ENCODE measurements at regions of chr1 and their contacts with region 1.

Region 1: DNA sequence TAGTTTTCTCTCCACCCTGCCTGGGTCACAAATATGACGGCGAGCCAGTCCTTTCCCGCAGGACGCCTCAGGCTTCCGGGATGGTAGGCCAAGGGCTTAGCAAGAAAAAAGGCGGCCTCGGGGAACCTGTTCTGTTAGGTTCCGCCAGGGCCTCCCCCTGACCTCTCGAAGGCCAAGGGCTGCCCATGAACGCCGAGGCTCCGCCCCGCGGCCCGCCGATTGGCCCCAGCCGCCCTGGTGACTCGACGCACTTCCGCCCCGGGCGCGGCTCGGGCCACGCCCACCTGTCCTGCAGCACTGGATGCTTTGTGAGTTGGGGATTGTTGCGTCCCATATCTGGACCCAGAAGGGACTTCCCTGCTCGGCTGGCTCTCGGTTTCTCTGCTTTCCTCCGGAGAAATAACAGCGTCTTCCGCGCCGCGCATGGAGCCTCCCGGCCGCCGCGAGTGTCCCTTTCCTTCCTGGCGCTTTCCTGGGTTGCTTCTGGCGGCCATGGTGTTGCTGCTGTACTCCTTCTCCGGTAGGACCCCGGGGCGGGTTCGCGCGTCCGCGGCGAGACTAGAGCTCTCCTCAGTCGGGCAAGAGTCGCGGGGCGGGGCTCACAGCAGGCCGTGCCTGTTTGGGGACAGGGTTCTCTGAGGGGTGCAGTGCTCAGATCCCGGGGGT is at the start of gene CD46:
- DNase-seq: peak; percentile 95 to 96
- ATAC-seq: peak; percentile 90 to 91
- H3K4me3 ChIP-seq: peak within 1 kb of the TSS; percentile 83 to 98 (median 91)
- H3K27ac ChIP-seq: peak within 1 kb of the TSS; percentile 90 to 97 (median 92)
- H3K4me1 ChIP-seq: peaks cover 47 to 48% of the 10 kb centered on the region in 2 donors
- H3K27me3 ChIP-seq: no peaks in the 10 kb centered on the region
- CTCF ChIP-seq: peak in 3 of 5 experiments; percentile 10 to 25 (median 13)
- POLR2A ChIP-seq: peak; percentile 80 to 91
- total RNA-seq, gene CD46: 42.1 to 101 (median 80.2) TPM

Region 2: DNA sequence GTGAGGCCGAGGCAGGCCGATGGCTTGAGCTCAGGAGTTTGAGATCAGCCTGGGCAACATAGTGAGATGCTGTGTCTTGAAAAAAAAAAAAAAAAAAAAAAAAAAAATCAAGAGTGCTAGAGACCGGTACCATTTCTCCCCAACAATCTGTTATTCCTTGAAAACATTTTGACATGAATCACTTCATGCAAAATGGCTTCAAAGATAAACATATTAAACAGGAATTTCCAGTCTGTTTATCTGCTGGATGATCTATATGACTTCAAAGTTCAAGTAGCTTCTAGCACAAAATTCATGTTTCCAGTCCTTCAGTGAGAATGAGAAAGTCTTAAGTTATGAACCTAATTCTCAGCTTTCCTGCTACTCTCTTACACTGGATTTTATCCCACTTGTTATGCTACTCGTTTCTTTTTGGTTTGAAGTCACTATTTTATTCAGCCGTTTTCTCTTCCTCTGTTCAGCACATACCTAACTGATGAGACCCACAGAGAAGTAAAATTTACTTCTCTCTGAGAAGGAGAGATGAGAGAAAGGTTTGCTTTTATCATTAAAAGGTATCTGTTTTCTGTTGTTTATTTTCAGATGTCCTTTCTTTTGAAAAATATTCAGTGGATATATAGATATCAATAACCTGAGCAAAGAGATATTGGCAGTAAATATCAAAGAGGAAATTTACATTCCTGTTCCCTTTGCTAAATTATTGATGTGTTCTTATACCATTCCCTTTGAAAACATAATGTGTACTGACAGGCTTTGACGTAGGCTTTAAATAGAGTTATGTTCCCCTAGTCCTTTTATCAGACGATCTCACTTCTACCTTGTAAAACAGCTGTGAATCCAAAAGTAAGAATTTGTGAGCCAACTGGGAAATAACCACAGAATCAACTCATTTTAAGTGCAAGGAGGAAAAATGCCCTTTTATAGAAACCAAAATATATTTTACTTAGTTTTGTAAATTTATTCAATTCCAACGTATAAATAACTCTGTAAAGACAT is 38.2 kb after region 1 on chr1:
- in situ Hi-C with region 1: no loop called
- intact Hi-C with region 1: loop called (anchors 2 kb)
- DNase-seq: no peak
- ATAC-seq: no peak
- H3K4me3 ChIP-seq: no peak overlapping the region
- H3K27ac ChIP-seq: peak overlapping the region; percentile 45 to 100 (median 84)
- H3K4me1 ChIP-seq: peaks cover 12 to 50% of the 10 kb centered on the region in 2 donors
- H3K27me3 ChIP-seq: no peaks in the 10 kb centered on the region
- CTCF ChIP-seq: no peak
- POLR2A ChIP-seq: no peak

Region 3: DNA sequence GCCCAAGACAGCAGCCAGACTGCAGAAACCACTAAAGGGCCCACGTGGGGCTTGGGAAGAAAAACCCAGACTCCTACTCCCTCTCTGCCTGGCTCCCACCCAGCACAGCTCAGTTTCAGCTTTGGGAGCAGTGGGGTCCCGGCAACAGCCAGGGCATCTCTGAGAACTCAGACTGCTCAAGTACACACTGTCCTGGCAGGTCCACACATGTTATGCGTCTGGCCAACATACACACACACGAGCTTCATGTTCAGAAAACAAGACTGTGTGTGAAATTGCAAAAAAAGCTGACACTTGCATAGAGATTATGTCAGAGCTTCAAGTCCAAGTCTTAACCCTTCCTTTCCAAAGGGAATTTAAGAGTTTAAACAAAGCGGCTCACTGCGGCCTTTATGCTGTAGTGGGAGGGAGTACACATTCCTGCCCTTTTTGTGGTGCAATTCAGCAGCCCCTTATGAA is 295.6 kb after region 1 on chr1:
- in situ Hi-C with region 1: no loop called
- intact Hi-C with region 1: no loop called
- DNase-seq: peak; percentile 71 to 81
- ATAC-seq: peak; percentile 78 to 85
- H3K4me3 ChIP-seq: no peak overlapping the region
- H3K27ac ChIP-seq: peak overlapping the region; percentile 65 to 81 (median 74)
- H3K4me1 ChIP-seq: peaks cover 24 to 29% of the 10 kb centered on the region in 2 donors
- H3K27me3 ChIP-seq: no peaks in the 10 kb centered on the region
- CTCF ChIP-seq: no peak
- POLR2A ChIP-seq: no peak

Measured in gastrocnemius medialis (tissue), 4 donors.